Naive thymus-derived CD4-positive, alpha-beta T cell (primary cell): ENCODE measurements at regions of chr17 and their contacts with region 1.

Region 1: DNA sequence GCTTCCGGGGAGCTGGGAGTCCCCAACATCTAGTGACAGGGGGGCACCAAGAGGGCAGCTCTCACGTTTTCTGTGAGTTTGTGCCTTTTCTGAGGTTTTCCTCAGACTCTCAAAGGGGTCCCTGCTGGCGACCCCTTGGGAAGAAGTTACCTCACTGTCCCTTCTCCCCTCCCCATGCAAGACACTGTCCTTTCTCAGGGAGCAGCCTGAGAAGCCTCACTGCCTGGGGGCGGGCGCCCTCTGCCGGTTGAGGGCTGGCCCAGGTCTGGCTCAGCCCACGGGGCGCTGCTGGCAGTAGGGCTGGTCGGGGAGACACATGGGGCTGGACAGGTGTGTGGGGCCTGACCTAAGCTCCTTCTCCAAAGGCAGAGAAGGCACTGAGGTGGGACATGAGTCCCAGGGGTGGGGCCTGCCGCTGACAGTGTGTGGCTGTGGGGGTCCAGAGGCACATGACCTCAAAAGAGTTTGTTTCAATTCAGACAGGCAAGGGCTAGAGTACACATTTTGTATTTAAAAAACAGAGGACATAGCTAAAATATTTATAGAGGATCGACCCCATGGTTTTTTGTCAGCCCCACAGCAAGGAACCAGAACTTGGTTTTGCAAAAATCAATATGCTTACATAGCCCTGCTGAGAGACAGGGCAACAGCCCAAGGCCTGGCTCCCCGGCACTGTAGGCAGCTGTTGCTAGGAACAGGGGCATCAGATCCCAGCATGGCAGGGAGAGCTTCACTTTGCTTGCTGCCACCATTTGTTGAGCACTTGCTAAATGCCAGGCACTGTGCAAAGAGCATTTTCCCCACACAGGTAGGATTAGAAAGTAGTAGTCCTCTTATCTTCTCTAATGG is 18.5 kb upstream of the ALDH3A1 start:
- DNase-seq: peak; percentile 54 to 88 (median 77)
- ATAC-seq: peak; percentile 93
- H3K4me3 ChIP-seq: no peak overlapping the region
- H3K4me3 Mint-ChIP-seq: peak overlapping the region in 8 of 10 donors; percentile 25 to 73 (median 59)
- H3K27ac ChIP-seq: peak overlapping the region; percentile 33
- H3K27ac Mint-ChIP-seq: peak overlapping the region; percentile 50 to 99 (median 87)
- H3K4me1 ChIP-seq: peaks cover 5 to 43% of the 10 kb centered on the region in 2 donors
- H3K4me1 Mint-ChIP-seq: peaks cover 22 to 63% (median 46%) of the 10 kb centered on the region in 7 donors
- H3K27me3 ChIP-seq: no peaks in the 10 kb centered on the region
- H3K27me3 Mint-ChIP-seq: peaks cover 0 to 3% (median 0%) of the 10 kb centered on the region in 5 donors

Region 2: DNA sequence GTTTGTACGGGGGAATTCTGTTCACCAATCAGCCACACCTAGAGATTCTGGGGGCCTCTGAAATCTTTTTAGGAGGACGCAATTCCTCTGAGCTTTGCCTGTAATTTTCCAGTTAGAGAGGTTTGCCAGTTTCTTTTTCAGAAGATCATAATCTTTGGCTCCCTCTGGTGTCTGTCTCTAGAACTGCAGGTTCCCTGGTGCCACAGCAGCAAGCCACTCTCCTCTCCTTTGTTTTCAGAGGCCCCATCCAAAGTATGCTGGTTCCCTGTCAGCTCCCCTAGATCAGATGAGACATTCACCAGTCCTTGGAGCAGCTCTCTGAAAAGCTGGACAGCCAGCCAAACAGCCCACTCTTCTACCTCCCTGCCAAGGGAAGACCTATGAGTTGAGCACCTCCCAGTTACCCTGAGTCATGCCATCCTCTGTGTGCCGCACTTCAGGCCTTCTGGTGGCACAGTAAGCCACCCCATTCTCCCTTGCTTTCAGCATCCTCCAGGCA is 319.5 kb before region 1 on chr17:
- CTCF ChIA-PET with region 1: no interaction called
- POLR2A ChIA-PET with region 1: no interaction called
- intact Hi-C with region 1: loop called (anchors 1 to 5 kb)
- DNase-seq: peak; percentile 29 to 83 (median 66)
- ATAC-seq: peak; percentile 81
- H3K4me3 ChIP-seq: no peak overlapping the region
- H3K4me3 Mint-ChIP-seq: no peak overlapping the region
- H3K27ac ChIP-seq: no peak overlapping the region
- H3K27ac Mint-ChIP-seq: peak overlapping the region in 2 of 9 donors; percentile 10 to 35
- H3K4me1 ChIP-seq: no peaks in the 10 kb centered on the region
- H3K4me1 Mint-ChIP-seq: peaks cover 0 to 6% (median 4%) of the 10 kb centered on the region in 7 donors
- H3K27me3 ChIP-seq: no peaks in the 10 kb centered on the region
- H3K27me3 Mint-ChIP-seq: peaks cover 9 to 25% (median 14%) of the 10 kb centered on the region in 5 donors

Region 3: DNA sequence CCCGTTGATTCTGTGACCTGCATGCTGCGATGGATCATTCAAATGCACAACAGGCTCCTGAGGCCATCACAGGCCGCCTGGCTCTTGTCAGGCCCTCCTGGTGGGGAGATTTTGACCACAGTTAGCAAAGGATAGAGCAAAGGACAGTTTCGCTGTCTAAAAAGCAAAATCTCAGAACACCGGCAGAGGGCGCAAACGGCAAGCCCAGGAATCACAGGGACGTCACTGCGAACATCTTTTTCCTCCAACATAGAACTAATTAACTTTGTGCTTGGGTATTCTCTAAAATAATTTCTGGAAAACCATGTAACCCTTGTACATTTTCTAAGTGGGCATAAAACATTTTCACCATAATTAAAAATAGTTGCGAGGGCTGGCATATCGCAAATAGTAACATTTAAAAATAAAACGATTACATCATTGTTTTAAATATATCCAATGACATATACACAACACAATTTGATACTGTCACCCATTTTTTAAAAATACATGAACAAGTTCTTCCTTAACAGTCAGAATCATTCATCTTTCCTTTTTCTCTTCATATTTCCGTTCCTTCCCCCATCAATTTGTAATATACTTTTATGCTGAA is 252.7 kb before region 1 on chr17:
- CTCF ChIA-PET with region 1: interaction called, 67 read pairs
- POLR2A ChIA-PET with region 1: interaction called, 8 read pairs
- intact Hi-C with region 1: loop called (anchors 1 kb)
- DNase-seq: peak; percentile 46 to 71 (median 66)
- ATAC-seq: peak; percentile 82
- H3K4me3 ChIP-seq: no peak overlapping the region
- H3K4me3 Mint-ChIP-seq: no peak overlapping the region
- H3K27ac ChIP-seq: no peak overlapping the region
- H3K27ac Mint-ChIP-seq: peak overlapping the region in 3 of 9 donors; percentile 3 to 56 (median 36)
- H3K4me1 ChIP-seq: peaks cover 0 to 4% of the 10 kb centered on the region in 2 donors
- H3K4me1 Mint-ChIP-seq: peaks cover 0 to 5% (median under 1%) of the 10 kb centered on the region in 7 donors
- H3K27me3 ChIP-seq: no peaks in the 10 kb centered on the region
- H3K27me3 Mint-ChIP-seq: peaks cover 0 to 11% (median 0%) of the 10 kb centered on the region in 5 donors

Region 4: DNA sequence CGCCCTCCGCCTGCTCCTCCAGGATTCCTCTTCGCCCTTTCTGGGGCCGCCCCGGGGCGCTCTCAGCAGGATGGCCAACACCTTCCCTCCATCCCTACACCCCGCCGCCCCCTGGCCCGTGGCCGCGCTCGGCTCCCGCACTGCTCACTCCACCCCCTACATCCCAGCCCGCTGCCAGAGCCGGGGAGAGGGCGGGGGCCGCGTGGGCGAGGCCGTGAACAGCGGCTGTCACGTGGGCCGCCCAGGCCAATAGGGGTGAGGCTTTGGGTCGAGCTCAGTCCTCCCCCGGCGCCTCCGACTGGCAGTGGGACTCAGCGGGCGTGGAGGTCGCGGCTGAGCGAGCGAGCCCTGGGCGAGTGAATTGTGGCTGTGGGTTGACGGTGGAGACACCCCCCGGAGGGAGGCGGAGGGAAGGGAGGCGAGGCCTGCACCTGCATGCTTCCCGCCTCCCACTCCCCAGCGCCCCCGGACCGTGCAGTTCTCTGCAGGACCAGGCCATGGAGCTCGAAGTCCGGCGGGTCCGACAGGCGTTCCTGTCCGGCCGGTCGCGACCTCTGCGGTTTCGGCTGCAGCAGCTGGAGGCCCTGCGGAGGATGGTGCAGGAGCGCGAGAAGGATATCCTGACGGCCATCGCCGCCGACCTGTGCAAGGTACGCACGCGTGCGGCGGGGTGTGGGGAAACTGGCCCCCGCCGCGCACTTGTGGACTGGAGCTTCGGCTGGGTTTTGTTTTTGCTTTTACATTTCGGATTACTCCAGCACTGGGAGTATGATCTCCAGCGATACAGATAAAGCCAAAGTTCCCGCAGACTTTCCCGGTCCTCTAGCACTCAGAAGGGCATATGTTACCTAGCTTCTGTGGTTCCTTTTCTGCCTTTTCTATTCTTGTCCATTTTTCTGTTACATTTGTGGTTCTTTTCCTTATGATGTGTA is 117.9 kb before region 1 on chr17 and contains the start of gene ALDH3A2:
- CTCF ChIA-PET with region 1: interaction called, 9 read pairs
- POLR2A ChIA-PET with region 1: interaction called, 17 read pairs
- intact Hi-C with region 1: loop called (anchors 2 to 10 kb)
- DNase-seq: peak; percentile 80 to 97 (median 88)
- ATAC-seq: peak; percentile 98
- H3K4me3 ChIP-seq: peak within 1 kb of the TSS; percentile 90
- H3K4me3 Mint-ChIP-seq: peak within 1 kb of the TSS; percentile 91 to 99 (median 96)
- H3K27ac ChIP-seq: peak within 1 kb of the TSS; percentile 67
- H3K27ac Mint-ChIP-seq: peak within 1 kb of the TSS; percentile 93 to 98 (median 94)
- H3K4me1 ChIP-seq: peaks cover 0 to 6% of the 10 kb centered on the region in 2 donors
- H3K4me1 Mint-ChIP-seq: peaks cover 31 to 47% (median 39%) of the 10 kb centered on the region in 7 donors
- H3K27me3 ChIP-seq: no peaks in the 10 kb centered on the region
- H3K27me3 Mint-ChIP-seq: peaks cover 0 to 13% (median 0%) of the 10 kb centered on the region in 5 donors
- total RNA-seq, gene ALDH3A2: 26.3 to 53.4 (median 32.4) TPM

Region 5: DNA sequence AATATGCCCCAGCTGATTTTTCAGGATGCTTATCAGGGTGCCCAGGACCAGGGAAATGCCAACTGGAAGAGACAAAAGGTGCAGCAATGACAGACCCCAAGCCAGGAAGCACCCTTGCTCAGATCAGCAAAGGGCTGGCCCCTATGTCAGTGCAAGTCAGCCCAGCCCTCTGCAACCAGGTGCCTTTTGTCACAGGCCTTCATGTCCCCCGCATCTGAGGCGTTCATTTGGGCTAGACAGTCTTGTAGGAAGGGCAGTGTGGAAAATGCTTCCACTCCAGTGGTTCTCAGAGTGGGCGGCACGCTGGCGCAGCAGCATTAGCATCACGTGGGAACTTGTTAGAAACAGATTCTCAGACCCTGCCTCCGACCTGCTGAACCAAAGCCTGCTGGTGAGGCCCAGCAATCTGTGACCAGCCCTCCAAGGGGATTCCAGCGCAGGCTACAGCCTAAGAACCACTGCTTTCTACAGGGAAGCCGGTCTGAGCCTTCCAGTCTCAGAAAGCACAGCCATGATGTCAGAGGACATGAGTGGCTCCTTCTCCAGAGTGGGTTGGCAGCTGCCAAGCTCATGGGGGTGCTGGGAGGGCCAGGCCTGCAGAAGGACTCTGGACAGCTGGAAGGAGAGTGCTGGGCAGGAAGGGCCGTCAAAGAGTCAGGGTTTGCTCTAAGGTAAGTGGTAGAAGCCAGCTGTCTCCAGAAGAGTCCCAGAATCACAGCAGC is 63.4 kb before region 1 on chr17:
- CTCF ChIA-PET with region 1: no interaction called
- POLR2A ChIA-PET with region 1: no interaction called
- intact Hi-C with region 1: no loop called
- DNase-seq: no peak
- ATAC-seq: no peak
- H3K4me3 ChIP-seq: no peak overlapping the region
- H3K4me3 Mint-ChIP-seq: no peak overlapping the region
- H3K27ac ChIP-seq: no peak overlapping the region
- H3K27ac Mint-ChIP-seq: peak overlapping the region in 3 of 9 donors; percentile 21 to 46 (median 32)
- H3K4me1 ChIP-seq: no peaks in the 10 kb centered on the region
- H3K4me1 Mint-ChIP-seq: no peaks in the 10 kb centered on the region
- H3K27me3 ChIP-seq: no peaks in the 10 kb centered on the region
- H3K27me3 Mint-ChIP-seq: no peaks in the 10 kb centered on the region

Region 6: DNA sequence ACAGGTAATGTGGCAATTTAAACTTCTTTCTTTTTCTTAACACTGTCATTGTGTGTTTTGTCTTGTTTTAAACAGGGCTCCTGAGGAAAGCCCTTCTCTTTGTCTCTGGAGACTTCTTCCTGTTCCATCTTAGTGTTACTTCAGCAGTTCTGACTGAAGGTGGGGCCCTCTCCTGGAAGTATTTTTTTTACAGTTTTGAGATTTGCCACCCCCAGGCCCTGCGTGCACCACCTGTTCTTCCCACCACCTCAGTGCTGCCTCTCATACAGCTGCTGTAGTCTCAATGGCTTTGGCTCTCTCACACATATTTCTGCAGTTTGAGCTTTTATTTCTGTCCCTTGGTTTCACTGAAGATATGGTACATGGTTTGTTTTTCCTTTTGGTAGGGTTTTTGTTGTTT is 33.9 kb after region 1 on chr17:
- CTCF ChIA-PET with region 1: interaction called, 6 read pairs
- POLR2A ChIA-PET with region 1: interaction called, 7 read pairs
- intact Hi-C with region 1: loop called in 1 of 2 experiments (anchors 2 kb)
- DNase-seq: peak in 6 of 9 donors; percentile 12 to 41 (median 22)
- ATAC-seq: no peak
- H3K4me3 ChIP-seq: no peak overlapping the region
- H3K4me3 Mint-ChIP-seq: no peak overlapping the region
- H3K27ac ChIP-seq: peak overlapping the region; percentile 42
- H3K27ac Mint-ChIP-seq: peak overlapping the region in 8 of 9 donors; percentile 7 to 92 (median 76)
- H3K4me1 ChIP-seq: peaks cover 0 to 14% of the 10 kb centered on the region in 2 donors
- H3K4me1 Mint-ChIP-seq: peaks cover 10 to 29% (median 19%) of the 10 kb centered on the region in 7 donors
- H3K27me3 ChIP-seq: no peaks in the 10 kb centered on the region
- H3K27me3 Mint-ChIP-seq: no peaks in the 10 kb centered on the region